Naive thymus-derived CD8-positive, alpha-beta T cell (primary cell): ENCODE measurements at regions of chr6 and their contacts with region 1.

Region 1: GRCh38 chr6:85678602-85679444 is 36.1 kb upstream of the SYNCRIP start:
- DNase-seq: peak; percentile 95 to 99 (median 98)
- ATAC-seq: peak; percentile 81 to 88
- H3K4me3 Mint-ChIP-seq: peak overlapping the region; percentile 94 to 99 (median 98)
- H3K27ac Mint-ChIP-seq: peak overlapping the region; percentile 97 to 100 (median 99)
- H3K4me1 Mint-ChIP-seq: peaks cover 26 to 48% (median 42%) of the 10 kb centered on the region in 4 donors
- H3K27me3 Mint-ChIP-seq: peaks cover 0 to 2% (median 0%) of the 10 kb centered on the region in 5 donors

Region 2: GRCh38 chr6:84227434-84228197 is 1451.2 kb before region 1 on chr6 and contains the start of gene CEP162:
- POLR2A ChIA-PET with region 1: interaction called, 11 read pairs
- DNase-seq: peak; percentile 80 to 97 (median 88)
- ATAC-seq: peak; percentile 91 to 92
- H3K4me3 Mint-ChIP-seq: peak within 1 kb of the TSS; percentile 89 to 100 (median 98)
- H3K27ac Mint-ChIP-seq: peak within 1 kb of the TSS; percentile 82 to 99 (median 96)
- H3K4me1 Mint-ChIP-seq: peaks cover 4 to 28% (median 26%) of the 10 kb centered on the region in 4 donors
- H3K27me3 Mint-ChIP-seq: peaks cover 6 to 15% (median 8%) of the 10 kb centered on the region in 5 donors
- polyA plus RNA-seq, gene CEP162: 2.4 to 7.7 (median 7.6) TPM

Region 3: GRCh38 chr6:85593438-85594196 is 85.2 kb before region 1 on chr6 and contains the start of gene SNX14:
- POLR2A ChIA-PET with region 1: interaction called, 90 read pairs
- DNase-seq: peak; percentile 60 to 90 (median 76)
- ATAC-seq: peak; percentile 82 to 84
- H3K4me3 Mint-ChIP-seq: peak within 1 kb of the TSS; percentile 92 to 99 (median 96)
- H3K27ac Mint-ChIP-seq: peak within 1 kb of the TSS; percentile 92 to 98 (median 98)
- H3K4me1 Mint-ChIP-seq: peaks cover 27 to 56% (median 49%) of the 10 kb centered on the region in 4 donors
- H3K27me3 Mint-ChIP-seq: no peaks in the 10 kb centered on the region
- polyA plus RNA-seq, gene SNX14: 40.9 to 54.6 (median 45.7) TPM

Region 4: DNA sequence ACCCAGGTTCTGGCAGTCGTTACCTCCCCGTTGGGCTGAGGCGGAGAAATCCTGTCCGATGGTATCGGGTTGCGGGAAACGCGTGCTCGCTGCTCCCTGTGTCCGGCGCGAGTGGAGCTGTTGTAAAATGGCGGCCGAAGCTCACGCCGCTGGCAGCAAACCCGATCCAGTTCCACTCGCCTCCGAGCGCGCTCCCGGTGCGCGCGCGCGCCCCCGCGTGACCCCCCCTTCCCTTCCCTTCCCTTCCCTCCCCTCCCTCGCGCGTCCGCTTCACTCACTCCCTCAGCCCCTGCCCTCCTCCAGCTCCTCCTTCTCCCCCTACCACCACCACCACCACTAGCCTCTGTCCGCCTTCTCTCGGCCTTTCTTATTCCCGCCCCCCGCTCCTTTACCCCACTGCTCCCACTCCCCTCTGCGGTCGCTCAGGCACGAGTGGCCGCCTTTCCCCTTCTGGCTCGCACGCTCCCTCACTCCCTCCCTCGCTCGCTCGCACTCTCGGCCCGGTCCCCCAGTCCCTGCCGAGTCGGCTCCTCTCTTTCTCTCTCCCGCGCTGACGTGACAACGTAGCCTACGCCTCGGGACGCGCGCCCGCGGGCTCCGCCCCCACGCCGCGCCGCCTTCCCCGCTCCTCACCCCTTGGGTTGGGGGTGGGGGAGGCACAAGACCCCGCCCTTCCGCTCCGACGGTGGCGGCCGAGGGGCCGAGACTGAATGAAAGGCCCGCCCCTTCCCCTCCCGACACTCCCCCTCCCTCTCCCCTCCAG is 35.9 kb before region 1 on chr6 and contains the start of gene SYNCRIP:
- POLR2A ChIA-PET with region 1: interaction called, 570 read pairs
- DNase-seq: peak; percentile 97 to 99 (median 98)
- ATAC-seq: peak; percentile 72 to 83
- H3K4me3 Mint-ChIP-seq: peak within 1 kb of the TSS; percentile 91 to 100 (median 96)
- H3K27ac Mint-ChIP-seq: peak within 1 kb of the TSS; percentile 93 to 100 (median 99)
- H3K4me1 Mint-ChIP-seq: peaks cover 28 to 49% (median 45%) of the 10 kb centered on the region in 4 donors
- H3K27me3 Mint-ChIP-seq: no peaks in the 10 kb centered on the region
- polyA plus RNA-seq, gene SYNCRIP: 68.6 to 80.9 (median 70.7) TPM

Region 5: GRCh38 chr6:87151781-87152525 is 1473.1 kb after region 1 on chr6:
- POLR2A ChIA-PET with region 1: interaction called, 14 read pairs
- DNase-seq: peak; percentile 41 to 84 (median 65)
- ATAC-seq: peak; percentile 37 to 58
- H3K4me3 Mint-ChIP-seq: peak overlapping the region; percentile 82 to 92 (median 88)
- H3K27ac Mint-ChIP-seq: peak overlapping the region; percentile 84 to 98 (median 95)
- H3K4me1 Mint-ChIP-seq: peaks cover 18 to 44% (median 41%) of the 10 kb centered on the region in 4 donors
- H3K27me3 Mint-ChIP-seq: peaks cover 0 to 2% (median 0%) of the 10 kb centered on the region in 5 donors